Endothelial cell of umbilical vein (primary cell): ENCODE measurements at regions of chr11 and their contacts with region 1.

Region 1: DNA sequence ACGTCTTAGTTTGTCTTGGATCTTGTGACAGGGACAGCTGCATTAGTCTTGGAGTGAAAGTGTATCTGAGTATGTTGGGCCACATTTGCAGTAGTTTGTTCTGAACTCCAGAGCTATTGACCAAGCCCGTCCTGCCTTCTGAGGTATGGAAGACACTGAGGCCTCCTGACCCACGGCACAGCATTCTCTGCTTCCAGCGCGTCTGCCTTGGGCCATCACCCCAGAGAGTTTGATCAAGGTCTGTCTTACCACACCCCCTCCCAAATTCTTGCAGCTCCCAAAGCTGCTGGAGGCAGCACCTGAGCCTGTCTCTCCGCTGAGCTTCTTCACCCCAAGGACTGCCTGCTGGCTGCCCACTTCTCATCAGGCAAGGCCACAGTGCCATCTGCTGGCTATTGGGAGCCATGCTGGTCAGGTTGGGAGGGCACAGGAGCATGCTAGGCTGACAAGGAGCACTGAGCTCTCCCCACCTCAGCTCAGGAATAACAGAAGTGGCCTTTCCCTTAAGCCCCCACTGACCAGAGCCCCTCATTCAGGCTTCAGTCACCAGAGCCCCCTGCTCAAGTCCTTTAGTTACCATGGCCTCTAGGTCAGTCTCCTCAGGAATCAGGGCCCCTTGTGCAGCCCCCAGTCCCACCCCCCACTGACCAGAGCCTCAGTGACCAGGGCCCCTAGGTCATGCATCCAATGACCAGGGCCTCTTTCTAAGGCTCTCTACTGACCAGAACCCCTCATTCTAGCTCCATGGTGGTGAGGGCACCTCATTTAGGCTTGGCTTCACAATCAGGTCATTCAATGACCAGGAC is 27.2 kb upstream of the SMPD1 start:
- DNase-seq: peak; percentile 72
- H3K4me3 ChIP-seq: no peak overlapping the region
- H3K27ac ChIP-seq: no peak overlapping the region
- H3K4me1 ChIP-seq: no peaks in the 10 kb centered on the region
- H3K27me3 ChIP-seq: no peaks in the 10 kb centered on the region
- CTCF ChIP-seq: peak; percentile 88 to 97
- POLR2A ChIP-seq: no peak

Region 2: DNA sequence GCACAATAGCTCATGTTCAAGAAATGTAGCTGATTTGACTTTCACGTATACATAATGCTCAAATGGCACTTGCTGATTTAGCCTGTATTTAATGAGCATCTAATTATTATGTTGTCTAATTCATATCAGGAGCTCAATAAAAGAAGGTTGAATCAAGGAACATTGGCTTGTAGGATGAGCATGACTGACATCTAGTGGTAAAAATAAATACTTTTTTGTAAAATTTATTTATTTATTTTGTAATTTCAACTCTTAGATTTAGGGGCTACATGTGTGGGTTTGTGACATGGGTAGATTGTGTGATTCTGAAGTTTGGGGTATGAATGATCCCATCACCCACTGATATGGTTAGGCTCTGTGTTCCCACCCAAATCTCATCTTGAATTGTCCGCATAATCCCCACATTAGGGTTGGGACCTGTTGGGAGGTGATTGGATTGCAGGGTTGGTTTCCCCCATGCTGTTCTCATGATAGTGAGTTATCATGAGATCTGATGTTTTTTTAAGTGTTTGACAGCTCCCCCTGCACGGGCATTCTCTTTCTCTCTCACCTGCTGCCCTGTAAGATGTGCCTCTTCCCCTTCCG is 471.8 kb before region 1 on chr11:
- CTCF ChIA-PET with region 1: interaction called, 16 read pairs
- POLR2A ChIA-PET with region 1: no interaction called
- dilution Hi-C with region 1: no loop called
- intact Hi-C with region 1: no loop called
- DNase-seq: peak; percentile 32
- H3K4me3 ChIP-seq: no peak overlapping the region
- H3K27ac ChIP-seq: no peak overlapping the region
- H3K4me1 ChIP-seq: no peaks in the 10 kb centered on the region
- H3K27me3 ChIP-seq: no peaks in the 10 kb centered on the region
- CTCF ChIP-seq: peak in 1 of 2 donors; percentile 13
- POLR2A ChIP-seq: no peak

Region 3: GRCh38 chr11:6219359-6219758 is 143.7 kb before region 1 on chr11:
- CTCF ChIA-PET with region 1: interaction called, 10 read pairs
- POLR2A ChIA-PET with region 1: no interaction called
- dilution Hi-C with region 1: no loop called
- intact Hi-C with region 1: no loop called
- DNase-seq: peak; percentile 65
- H3K4me3 ChIP-seq: no peak overlapping the region
- H3K27ac ChIP-seq: no peak overlapping the region
- H3K4me1 ChIP-seq: peaks cover 11% of the 10 kb centered on the region
- H3K27me3 ChIP-seq: no peaks in the 10 kb centered on the region
- CTCF ChIP-seq: no peak
- POLR2A ChIP-seq: no peak

Region 4: GRCh38 chr11:6298605-6299004 is 64.5 kb before region 1 on chr11:
- CTCF ChIA-PET with region 1: interaction called, 140 read pairs
- POLR2A ChIA-PET with region 1: no interaction called
- dilution Hi-C with region 1: no loop called
- intact Hi-C with region 1: loop called (anchors 1 kb)
- DNase-seq: peak; percentile 32
- H3K4me3 ChIP-seq: no peak overlapping the region
- H3K27ac ChIP-seq: no peak overlapping the region
- H3K4me1 ChIP-seq: no peaks in the 10 kb centered on the region
- H3K27me3 ChIP-seq: peaks cover 0 to 2% of the 10 kb centered on the region in 2 experiments
- CTCF ChIP-seq: peak; percentile 58 to 83
- POLR2A ChIP-seq: no peak

Region 5: DNA sequence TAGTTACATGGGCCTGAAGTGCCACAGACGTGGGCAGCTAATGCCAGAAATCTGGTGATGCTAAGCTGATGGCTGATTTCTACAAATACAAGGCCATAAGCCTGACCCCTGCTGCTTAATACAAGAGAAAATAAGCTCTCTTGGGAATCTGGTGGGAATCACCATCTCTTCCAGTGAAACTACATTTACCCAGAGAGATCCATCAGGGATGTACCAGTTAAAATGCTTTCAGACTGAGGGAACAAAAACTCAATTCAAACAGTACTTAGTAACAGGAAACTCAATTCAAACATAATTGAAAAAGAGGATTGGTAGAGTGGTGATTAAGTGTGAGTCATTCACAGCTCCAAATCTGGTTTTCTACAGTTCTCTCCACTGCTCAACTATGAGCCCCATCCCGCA is 41.1 kb before region 1 on chr11:
- CTCF ChIA-PET with region 1: interaction called, 75 read pairs
- POLR2A ChIA-PET with region 1: no interaction called
- dilution Hi-C with region 1: no loop called
- intact Hi-C with region 1: no loop called
- DNase-seq: peak; percentile 68
- H3K4me3 ChIP-seq: no peak overlapping the region
- H3K27ac ChIP-seq: peak overlapping the region; percentile 83
- H3K4me1 ChIP-seq: peaks cover 48% of the 10 kb centered on the region
- H3K27me3 ChIP-seq: no peaks in the 10 kb centered on the region
- CTCF ChIP-seq: no peak
- POLR2A ChIP-seq: peak; percentile 65

Region 6: GRCh38 chr11:6389921-6390724 is 27.0 kb after region 1 on chr11 and contains the start of gene SMPD1:
- CTCF ChIA-PET with region 1: interaction called, 12 read pairs
- POLR2A ChIA-PET with region 1: no interaction called
- dilution Hi-C with region 1: no loop called
- intact Hi-C with region 1: no loop called
- DNase-seq: peak; percentile 90
- H3K4me3 ChIP-seq: peak within 1 kb of the TSS; percentile 71 to 82 (median 72)
- H3K27ac ChIP-seq: peak within 1 kb of the TSS; percentile 73
- H3K4me1 ChIP-seq: peaks cover 33% of the 10 kb centered on the region
- H3K27me3 ChIP-seq: no peaks in the 10 kb centered on the region
- CTCF ChIP-seq: no peak
- POLR2A ChIP-seq: peak; percentile 86
- total RNA-seq, gene SMPD1: 51.9 and 58.9 TPM in 2 replicates

Region 7: DNA sequence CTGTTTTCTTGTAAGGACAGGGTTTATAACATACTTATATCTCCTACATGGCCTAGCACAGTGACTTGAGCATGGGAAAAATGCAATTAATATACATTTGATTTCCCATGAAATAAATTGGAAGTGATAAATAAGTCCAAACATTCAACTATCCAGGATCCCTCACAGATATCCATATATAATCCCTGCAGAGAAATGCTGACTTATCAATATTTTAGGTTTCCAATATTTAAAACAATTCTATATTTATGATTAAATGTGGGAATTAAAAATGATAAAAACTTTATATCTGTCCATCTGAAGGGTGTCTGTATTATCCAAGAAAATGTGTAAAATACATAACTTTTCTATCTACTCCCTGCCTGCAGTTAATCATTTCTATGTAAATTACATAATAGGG is 519.7 kb after region 1 on chr11:
- CTCF ChIA-PET with region 1: no interaction called
- POLR2A ChIA-PET with region 1: no interaction called
- dilution Hi-C with region 1: no loop called
- intact Hi-C with region 1: no loop called
- DNase-seq: no peak
- H3K4me3 ChIP-seq: no peak overlapping the region
- H3K27ac ChIP-seq: no peak overlapping the region
- H3K4me1 ChIP-seq: no peaks in the 10 kb centered on the region
- H3K27me3 ChIP-seq: peaks cover 0 to 5% of the 10 kb centered on the region in 2 experiments
- CTCF ChIP-seq: no peak
- POLR2A ChIP-seq: no peak

Region 8: GRCh38 chr11:7165911-7166310 is 802.8 kb after region 1 on chr11:
- CTCF ChIA-PET with region 1: no interaction called
- POLR2A ChIA-PET with region 1: no interaction called
- dilution Hi-C with region 1: no loop called
- intact Hi-C with region 1: no loop called
- DNase-seq: no peak
- H3K4me3 ChIP-seq: no peak overlapping the region
- H3K27ac ChIP-seq: no peak overlapping the region
- H3K4me1 ChIP-seq: no peaks in the 10 kb centered on the region
- H3K27me3 ChIP-seq: no peaks in the 10 kb centered on the region
- CTCF ChIP-seq: no peak
- POLR2A ChIP-seq: no peak